ENCODE measurements at regions of chr5 and their contacts with region 1.

Region 1: GRCh38 chr5:10761166-10761932 is at the start of gene DAP:
- DNase-seq: peak; percentile 71
- H3K4me3 ChIP-seq: peak within 1 kb of the TSS; percentile 57 to 97 (median 80)
- H3K27ac ChIP-seq: peak within 1 kb of the TSS; percentile 76
- H3K4me1 ChIP-seq: peaks cover 3% of the 10 kb centered on the region
- H3K27me3 ChIP-seq: no peaks in the 10 kb centered on the region
- CTCF ChIP-seq: no peak
- total RNA-seq, gene DAP: 15.3 to 102 TPM

Region 2: GRCh38 chr5:10595678-10596309 is 165.6 kb before region 1 on chr5:
- CTCF ChIA-PET with region 1: no interaction called
- dilution Hi-C with region 1: no loop called
- in situ Hi-C with region 1: no loop called
- intact Hi-C with region 1: loop called (anchors 10 kb)
- DNase-seq: peak; percentile 93
- H3K4me3 ChIP-seq: peak overlapping the region in 1 of 3 experiments; percentile 13
- H3K27ac ChIP-seq: peak overlapping the region; percentile 64
- H3K4me1 ChIP-seq: peaks cover 36% of the 10 kb centered on the region
- H3K27me3 ChIP-seq: no peaks in the 10 kb centered on the region
- CTCF ChIP-seq: no peak

Region 3: GRCh38 chr5:10704949-10705621 is 56.3 kb before region 1 on chr5:
- CTCF ChIA-PET with region 1: no interaction called
- dilution Hi-C with region 1: no loop called
- in situ Hi-C with region 1: no loop called
- intact Hi-C with region 1: loop called (anchors 2 kb)
- DNase-seq: peak; percentile 56
- H3K4me3 ChIP-seq: no peak overlapping the region
- H3K27ac ChIP-seq: no peak overlapping the region
- H3K4me1 ChIP-seq: peaks cover 54% of the 10 kb centered on the region
- H3K27me3 ChIP-seq: no peaks in the 10 kb centered on the region
- CTCF ChIP-seq: no peak

Region 4: GRCh38 chr5:11166923-11167322 is 405.6 kb after region 1 on chr5:
- CTCF ChIA-PET with region 1: no interaction called
- dilution Hi-C with region 1: no loop called
- in situ Hi-C with region 1: no loop called
- intact Hi-C with region 1: no loop called
- DNase-seq: no peak
- H3K4me3 ChIP-seq: no peak overlapping the region
- H3K27ac ChIP-seq: no peak overlapping the region
- H3K4me1 ChIP-seq: no peaks in the 10 kb centered on the region
- H3K27me3 ChIP-seq: no peaks in the 10 kb centered on the region
- CTCF ChIP-seq: no peak

Measured in mammary epithelial cell (primary cell).